ENCODE measurements at regions of chr4 and their contacts with region 1.

Region 1: GRCh38 chr4:94406668-94407437 is 44.9 kb upstream of the PDLIM5 start:
- DNase-seq: peak in 3 of 4 donors; percentile 57 to 87 (median 67)
- ATAC-seq: peak; percentile 95
- H3K4me3 ChIP-seq: no peak overlapping the region
- H3K27ac ChIP-seq: no peak overlapping the region
- H3K4me1 ChIP-seq: no peaks in the 10 kb centered on the region
- H3K27me3 ChIP-seq: no peaks in the 10 kb centered on the region
- CTCF ChIP-seq: peak; percentile 80 to 87

Region 2: DNA sequence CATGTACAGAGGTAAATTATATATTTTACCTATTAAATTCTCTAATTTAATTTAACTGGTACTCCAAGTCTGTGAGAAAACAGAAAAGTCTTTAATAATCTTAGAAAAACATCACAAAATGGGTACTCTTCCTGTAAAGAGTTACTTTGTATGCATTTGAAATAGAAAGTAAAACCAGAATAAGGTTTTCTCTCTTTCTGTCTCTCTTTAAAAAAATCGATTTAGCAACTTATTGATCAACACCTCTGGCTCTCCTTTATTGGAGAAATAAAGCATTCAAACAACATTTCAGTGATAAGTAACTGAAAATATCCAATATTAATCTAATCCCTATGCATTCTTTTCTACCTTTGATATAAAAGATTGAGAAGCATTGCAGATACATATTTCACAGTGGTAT is 550.9 kb before region 1 on chr4:
- intact Hi-C with region 1: no loop called
- DNase-seq: no peak
- ATAC-seq: no peak
- H3K4me3 ChIP-seq: no peak overlapping the region
- H3K27ac ChIP-seq: no peak overlapping the region
- H3K4me1 ChIP-seq: no peaks in the 10 kb centered on the region
- H3K27me3 ChIP-seq: no peaks in the 10 kb centered on the region
- CTCF ChIP-seq: no peak

Region 3: GRCh38 chr4:94304365-94304971 is 102.4 kb before region 1 on chr4:
- intact Hi-C with region 1: loop called in 1 of 2 experiments (anchors 10 kb)
- DNase-seq: peak in 2 of 4 donors; percentile 5 to 30
- ATAC-seq: peak; percentile 78
- H3K4me3 ChIP-seq: no peak overlapping the region
- H3K27ac ChIP-seq: no peak overlapping the region
- H3K4me1 ChIP-seq: no peaks in the 10 kb centered on the region
- H3K27me3 ChIP-seq: no peaks in the 10 kb centered on the region
- CTCF ChIP-seq: peak in 1 of 2 donors; percentile 62

Region 4: DNA sequence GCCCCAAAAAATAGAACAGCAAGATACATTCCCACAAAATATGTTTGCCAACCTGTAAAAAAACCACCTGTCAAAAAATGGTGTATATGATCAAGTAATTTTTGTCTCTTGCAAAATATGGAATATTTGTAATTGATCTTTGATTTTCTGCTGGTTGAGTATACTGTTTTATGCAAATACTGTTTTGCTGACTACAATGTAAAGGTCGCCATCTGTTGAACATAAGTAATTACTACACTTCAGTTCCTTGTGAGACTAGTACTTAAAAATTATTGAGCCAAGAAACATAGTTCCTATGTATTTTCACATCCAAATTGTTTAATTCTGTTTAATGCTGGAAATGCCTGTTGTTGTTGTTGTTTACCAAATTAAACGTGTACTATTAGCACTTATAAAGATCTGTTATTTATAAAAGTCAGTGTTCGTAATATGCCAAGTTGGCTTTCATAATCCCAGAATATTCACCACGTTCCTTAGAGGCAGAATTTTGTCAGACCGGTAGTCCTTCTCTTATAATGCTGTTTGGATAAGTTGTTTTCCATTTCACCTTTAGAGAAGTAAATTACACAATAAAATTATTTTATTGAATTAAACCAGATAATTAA is 189.1 kb after region 1 on chr4:
- intact Hi-C with region 1: loop called in 1 of 2 experiments (anchors 5 kb)
- DNase-seq: peak in 2 of 4 donors; percentile 47 to 54
- ATAC-seq: peak; percentile 83
- H3K4me3 ChIP-seq: no peak overlapping the region
- H3K27ac ChIP-seq: no peak overlapping the region
- H3K4me1 ChIP-seq: peaks cover 0 to 7% of the 10 kb centered on the region in 2 donors
- H3K27me3 ChIP-seq: no peaks in the 10 kb centered on the region
- CTCF ChIP-seq: peak; percentile 53 to 62

Measured in left lung (tissue), 14 donors.